Activated T-helper 1 cell treated with anti-CD3 and anti-CD28 coated beads, Interleukin-12 subunit alpha, Interleukin-12 subunit beta, Interleukin-2, Interleukin-4 antibody, amounts not matched to agents 30 ng/mL and 10 ng/mL and 1 ng/mL, durations not matched to agents 14 hours and 24 hours and 36 hours (primary cell): ENCODE measurements at regions of chr19 and their contacts with region 1.

Region 1: GRCh38 chr19:10936661-10937084 is 8.1 kb downstream of the TIMM29 start:
- DNase-seq: peak; percentile 20
- H3K4me3 Mint-ChIP-seq: no peak overlapping the region
- H3K27ac Mint-ChIP-seq: no peak overlapping the region
- H3K4me1 Mint-ChIP-seq: peaks cover 5% of the 10 kb centered on the region
- H3K27me3 Mint-ChIP-seq: no peaks in the 10 kb centered on the region

Region 2: GRCh38 chr19:10979951-10980381 is 43.3 kb after region 1 on chr19:
- intact Hi-C with region 1: loop called (anchors 5 kb)
- DNase-seq: no peak
- H3K4me3 Mint-ChIP-seq: no peak overlapping the region
- H3K27ac Mint-ChIP-seq: no peak overlapping the region
- H3K4me1 Mint-ChIP-seq: peaks cover 19% of the 10 kb centered on the region
- H3K27me3 Mint-ChIP-seq: no peaks in the 10 kb centered on the region